Activated naive CD4-positive, alpha-beta T cell treated with anti-CD3 and anti-CD28 coated beads for 36 hours (primary cell): ENCODE measurements at regions of chr1 and their contacts with region 1.

Region 1: DNA sequence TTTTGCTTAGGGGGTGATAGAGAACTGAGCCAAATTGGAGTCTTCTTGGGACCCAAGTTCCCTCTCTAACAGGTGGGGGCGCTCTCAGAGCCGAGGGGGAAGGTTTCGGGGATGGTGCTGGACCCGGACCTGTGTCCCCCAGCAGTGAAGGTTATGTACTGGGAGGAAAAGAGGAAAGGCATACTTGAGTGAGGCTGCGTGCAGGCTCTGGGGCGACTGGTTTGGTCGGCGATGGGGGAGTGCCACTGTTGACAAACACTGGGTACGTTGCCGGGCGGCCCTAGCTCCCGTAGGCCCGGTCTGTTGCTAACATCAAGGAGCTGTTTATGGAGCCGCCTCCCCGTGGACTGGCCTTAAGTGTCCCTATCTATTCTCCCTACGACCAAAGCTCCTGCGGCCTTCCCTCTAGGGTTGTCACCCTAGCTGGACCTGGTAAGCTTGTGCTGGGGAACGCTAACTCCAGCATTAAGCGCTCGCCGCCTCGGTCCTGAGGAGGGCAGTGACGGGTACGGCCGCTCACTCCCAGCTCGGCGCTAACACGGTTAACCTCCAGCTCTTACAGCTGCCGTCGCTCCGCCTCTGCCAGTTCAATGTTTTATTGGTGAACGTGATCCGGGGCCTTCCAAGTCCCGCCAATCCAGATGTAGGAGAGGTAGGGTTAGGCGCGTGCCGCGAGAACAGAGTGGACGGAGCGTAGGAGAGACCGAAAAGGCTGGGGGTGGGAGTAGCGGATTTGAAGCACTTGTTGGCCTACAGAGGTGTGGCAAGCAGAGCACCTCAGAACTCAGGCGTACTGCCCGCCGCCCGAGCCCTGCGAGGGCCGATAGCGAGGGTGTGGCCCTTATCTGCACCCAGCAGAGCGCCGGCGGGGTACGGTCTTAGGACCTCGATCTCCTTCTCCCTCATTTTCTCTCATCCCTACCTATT is at the start of gene PPOX:
- DNase-seq: peak; percentile 97
- H3K4me3 Mint-ChIP-seq: peak within 1 kb of the TSS; percentile 87
- H3K27ac Mint-ChIP-seq: peak within 1 kb of the TSS; percentile 87
- H3K4me1 Mint-ChIP-seq: peaks cover 49% of the 10 kb centered on the region
- H3K27me3 Mint-ChIP-seq: no peaks in the 10 kb centered on the region
- total RNA-seq, gene PPOX: 24.9 to 26.0 TPM

Region 2: DNA sequence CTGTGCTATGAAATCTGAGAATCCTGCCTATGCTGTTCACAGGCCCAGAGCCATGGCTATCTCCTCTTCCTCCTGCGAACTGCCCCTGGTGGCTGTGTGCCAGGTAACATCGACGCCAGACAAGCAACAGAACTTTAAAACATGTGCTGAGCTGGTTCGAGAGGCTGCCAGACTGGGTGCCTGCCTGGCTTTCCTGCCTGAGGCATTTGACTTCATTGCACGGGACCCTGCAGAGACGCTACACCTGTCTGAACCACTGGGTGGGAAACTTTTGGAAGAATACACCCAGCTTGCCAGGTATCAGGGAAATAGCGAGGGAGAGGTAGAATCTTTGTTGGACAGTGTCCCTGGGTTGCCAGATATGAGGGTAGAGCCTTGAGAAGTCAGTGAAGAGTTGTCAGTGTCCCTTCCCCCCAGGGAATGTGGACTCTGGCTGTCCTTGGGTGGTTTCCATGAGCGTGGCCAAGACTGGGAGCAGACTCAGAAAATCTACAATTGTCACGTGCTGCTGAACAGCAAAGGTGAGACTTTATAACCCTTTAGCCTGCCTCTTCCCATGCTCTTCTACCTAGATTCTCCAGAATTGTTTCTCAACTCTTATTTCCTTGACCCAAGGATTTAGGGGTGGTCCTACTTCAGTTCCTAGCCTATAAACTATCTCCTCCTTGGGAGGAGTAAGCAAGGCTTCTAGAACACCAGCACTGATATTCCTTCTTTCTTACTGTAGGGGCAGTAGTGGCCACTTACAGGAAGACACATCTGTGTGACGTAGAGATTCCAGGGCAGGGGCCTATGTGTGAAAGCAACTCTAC is 46.7 kb before region 1 on chr1:
- CTCF ChIA-PET with region 1: interaction called, 3 read pairs
- intact Hi-C with region 1: loop called (anchors 1 kb)
- DNase-seq: peak; percentile 86
- H3K4me3 Mint-ChIP-seq: peak overlapping the region; percentile 92
- H3K27ac Mint-ChIP-seq: peak overlapping the region; percentile 88
- H3K4me1 Mint-ChIP-seq: peaks cover 64% of the 10 kb centered on the region
- H3K27me3 Mint-ChIP-seq: no peaks in the 10 kb centered on the region

Region 3: GRCh38 chr1:161132410-161133219 is 33.4 kb before region 1 on chr1 and contains the start of gene DEDD:
- CTCF ChIA-PET with region 1: interaction called, 8 read pairs
- intact Hi-C with region 1: loop called (anchors 1 kb)
- DNase-seq: peak; percentile 95
- H3K4me3 Mint-ChIP-seq: no peak within 1 kb of the TSS
- H3K27ac Mint-ChIP-seq: no peak within 1 kb of the TSS
- H3K4me1 Mint-ChIP-seq: peaks cover 44% of the 10 kb centered on the region
- H3K27me3 Mint-ChIP-seq: no peaks in the 10 kb centered on the region
- total RNA-seq, gene DEDD: 29.7 to 34.0 TPM

Region 4: GRCh38 chr1:161153679-161154426 is 12.2 kb before region 1 on chr1 and contains the start of gene UFC1:
- CTCF ChIA-PET with region 1: interaction called, 22 read pairs
- intact Hi-C with region 1: no loop called
- DNase-seq: peak; percentile 88
- H3K4me3 Mint-ChIP-seq: peak within 1 kb of the TSS; percentile 95
- H3K27ac Mint-ChIP-seq: peak within 1 kb of the TSS; percentile 99
- H3K4me1 Mint-ChIP-seq: peaks cover 22% of the 10 kb centered on the region
- H3K27me3 Mint-ChIP-seq: no peaks in the 10 kb centered on the region
- total RNA-seq, gene UFC1: 89.4 to 94.9 TPM

Region 5: GRCh38 chr1:161177112-161177935 is 11.3 kb after region 1 on chr1 and contains the start of gene B4GALT3:
- CTCF ChIA-PET with region 1: interaction called, 21 read pairs
- intact Hi-C with region 1: loop called (anchors 1 kb)
- DNase-seq: peak; percentile 97
- H3K4me3 Mint-ChIP-seq: peak within 1 kb of the TSS; percentile 98
- H3K27ac Mint-ChIP-seq: peak within 1 kb of the TSS; percentile 96
- H3K4me1 Mint-ChIP-seq: peaks cover 60% of the 10 kb centered on the region
- H3K27me3 Mint-ChIP-seq: no peaks in the 10 kb centered on the region
- total RNA-seq, gene B4GALT3: 45.7 to 49.0 TPM

Region 6: DNA sequence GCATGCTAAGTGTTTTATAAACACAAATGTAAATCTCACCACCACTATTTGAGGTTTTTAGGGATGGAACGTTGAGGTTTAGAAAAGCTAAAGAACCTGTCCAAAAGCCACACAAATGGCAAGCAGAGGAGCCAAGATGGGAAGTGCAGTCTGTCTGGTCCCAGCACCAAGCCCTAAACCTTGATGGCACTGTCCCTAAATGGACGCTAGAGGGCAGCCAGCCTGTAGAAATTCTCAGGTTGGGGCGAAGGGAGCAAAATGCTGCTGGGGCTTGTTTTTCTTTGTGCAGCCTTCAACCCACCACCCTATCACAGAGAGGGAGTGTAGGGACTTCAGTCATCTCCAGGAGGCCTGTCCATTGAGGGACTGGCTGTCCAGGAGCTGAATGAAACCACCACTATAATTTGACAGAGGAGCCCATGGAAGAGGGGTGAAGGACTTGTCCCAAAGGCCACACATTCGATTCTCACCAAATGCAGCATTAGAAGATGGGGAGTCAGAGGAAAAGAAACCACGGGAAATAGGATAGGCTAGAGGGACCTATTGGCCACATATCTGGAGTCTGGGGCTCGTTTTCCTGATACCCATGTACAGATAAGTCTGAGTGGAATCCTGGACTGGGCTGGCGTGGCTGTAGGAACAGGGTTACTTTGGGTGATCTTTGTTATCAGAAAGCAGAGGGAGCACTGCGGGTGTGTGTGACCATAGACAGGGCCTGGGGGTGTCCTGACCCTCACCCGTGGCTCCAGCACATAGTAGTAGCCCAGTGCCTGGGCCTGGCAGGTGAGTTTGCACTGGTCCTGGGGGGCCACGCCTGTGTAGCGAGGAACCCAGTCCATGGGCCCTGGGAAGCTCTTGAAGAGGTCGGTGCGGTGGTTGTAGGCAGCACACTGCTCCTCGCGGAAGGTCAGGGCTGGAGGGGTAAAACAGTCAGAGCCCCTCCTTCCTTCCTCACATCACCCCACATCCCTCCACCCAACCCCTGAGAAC is 26.8 kb after region 1 on chr1:
- CTCF ChIA-PET with region 1: interaction called, 19 read pairs
- intact Hi-C with region 1: no loop called
- DNase-seq: peak; percentile 84
- H3K4me3 Mint-ChIP-seq: no peak overlapping the region
- H3K27ac Mint-ChIP-seq: peak overlapping the region; percentile 51
- H3K4me1 Mint-ChIP-seq: peaks cover 34% of the 10 kb centered on the region
- H3K27me3 Mint-ChIP-seq: no peaks in the 10 kb centered on the region

Region 7: DNA sequence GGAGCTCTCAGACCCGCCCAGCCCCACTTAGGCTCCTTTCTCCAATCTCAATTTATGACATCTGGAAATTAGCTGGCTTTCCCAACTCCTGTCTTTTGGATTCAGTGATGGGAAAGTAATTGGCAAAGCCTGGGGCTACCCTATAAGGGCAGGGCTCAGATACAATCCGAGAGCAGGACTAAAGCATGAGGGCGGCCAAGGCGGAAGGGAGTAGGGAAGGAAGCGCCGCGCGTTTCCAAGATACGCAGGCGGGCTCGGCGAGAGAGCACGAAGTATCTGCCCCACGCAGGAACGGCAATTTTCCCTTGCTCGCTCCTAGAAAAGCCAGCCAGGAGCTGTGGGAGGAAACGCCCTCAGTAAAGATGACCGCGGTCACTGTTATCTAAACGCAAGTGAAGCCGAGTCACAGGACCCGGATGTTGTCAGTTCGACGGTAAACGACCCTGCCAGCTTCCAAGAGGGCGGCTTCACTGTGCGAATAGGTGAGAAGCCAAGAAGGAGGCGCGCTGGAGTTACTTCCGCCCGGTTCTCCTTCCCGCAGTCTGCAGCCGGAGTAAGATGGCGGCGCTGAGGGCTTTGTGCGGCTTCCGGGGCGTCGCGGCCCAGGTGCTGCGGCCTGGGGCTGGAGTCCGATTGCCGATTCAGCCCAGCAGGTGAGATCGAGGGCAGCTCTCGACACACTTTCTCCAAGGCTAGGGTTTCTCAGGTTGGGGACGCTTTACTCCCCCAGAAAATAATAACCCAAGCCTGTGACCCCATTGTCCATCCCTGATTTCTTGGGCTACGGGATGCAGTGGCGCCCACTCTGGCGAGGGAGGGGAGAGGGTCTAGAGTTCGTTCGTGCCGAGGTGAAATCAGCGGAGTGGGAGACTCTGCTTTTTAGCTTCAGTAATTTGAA is 36.1 kb after region 1 on chr1 and contains the start of gene NDUFS2:
- CTCF ChIA-PET with region 1: interaction called, 12 read pairs
- intact Hi-C with region 1: loop called (anchors 1 kb)
- DNase-seq: peak; percentile 99
- H3K4me3 Mint-ChIP-seq: peak within 1 kb of the TSS; percentile 92
- H3K27ac Mint-ChIP-seq: peak within 1 kb of the TSS; percentile 89
- H3K4me1 Mint-ChIP-seq: peaks cover 75% of the 10 kb centered on the region
- H3K27me3 Mint-ChIP-seq: no peaks in the 10 kb centered on the region
- total RNA-seq, gene NDUFS2: 126 to 130 TPM